Right lobe of liver (tissue), 6 donors: ENCODE measurements at regions of chrX and their contacts with region 1.

Region 1: DNA sequence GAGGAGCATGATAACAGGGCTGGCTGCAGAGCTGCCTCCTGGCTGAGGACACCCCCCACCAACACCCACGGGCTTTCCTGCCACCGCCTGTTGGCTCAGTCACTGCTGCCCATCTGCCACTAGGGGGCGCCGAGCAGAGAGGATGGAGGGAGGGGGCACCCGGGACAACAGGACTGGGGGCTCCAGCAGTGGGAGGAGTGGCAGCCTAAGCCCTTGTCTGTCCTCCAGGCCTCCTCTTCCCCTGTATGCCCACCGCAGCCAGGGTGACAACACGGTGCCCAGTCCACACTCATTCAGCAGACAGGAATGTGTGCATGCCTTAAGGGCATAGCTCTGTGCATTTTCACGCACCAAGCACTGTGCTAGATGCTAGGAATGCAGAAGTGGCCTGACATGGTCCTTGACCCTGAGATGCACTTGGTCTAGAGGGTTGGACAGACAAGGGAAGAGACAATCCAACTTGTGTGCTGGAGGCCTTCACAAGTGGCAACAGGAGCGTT is 149.9 kb downstream of the AMMECR1 start:
- DNase-seq: peak in 1 of 3 donors; percentile 46
- ATAC-seq: peak in 3 of 4 donors; percentile 31 to 40 (median 39)
- H3K4me3 ChIP-seq: no peak overlapping the region
- H3K27ac ChIP-seq: no peak overlapping the region
- H3K4me1 ChIP-seq: no peaks in the 10 kb centered on the region
- H3K27me3 ChIP-seq: no peaks in the 10 kb centered on the region
- CTCF ChIP-seq: peak; percentile 25 to 59 (median 50)
- POLR2A ChIP-seq: no peak

Region 2: GRCh38 chrX:110060846-110061537 is 107.0 kb before region 1 on chrX:
- intact Hi-C with region 1: no loop called
- DNase-seq: no peak
- ATAC-seq: no peak
- H3K4me3 ChIP-seq: no peak overlapping the region
- H3K27ac ChIP-seq: no peak overlapping the region
- H3K4me1 ChIP-seq: no peaks in the 10 kb centered on the region
- H3K27me3 ChIP-seq: no peaks in the 10 kb centered on the region
- CTCF ChIP-seq: no peak
- POLR2A ChIP-seq: no peak

Region 3: DNA sequence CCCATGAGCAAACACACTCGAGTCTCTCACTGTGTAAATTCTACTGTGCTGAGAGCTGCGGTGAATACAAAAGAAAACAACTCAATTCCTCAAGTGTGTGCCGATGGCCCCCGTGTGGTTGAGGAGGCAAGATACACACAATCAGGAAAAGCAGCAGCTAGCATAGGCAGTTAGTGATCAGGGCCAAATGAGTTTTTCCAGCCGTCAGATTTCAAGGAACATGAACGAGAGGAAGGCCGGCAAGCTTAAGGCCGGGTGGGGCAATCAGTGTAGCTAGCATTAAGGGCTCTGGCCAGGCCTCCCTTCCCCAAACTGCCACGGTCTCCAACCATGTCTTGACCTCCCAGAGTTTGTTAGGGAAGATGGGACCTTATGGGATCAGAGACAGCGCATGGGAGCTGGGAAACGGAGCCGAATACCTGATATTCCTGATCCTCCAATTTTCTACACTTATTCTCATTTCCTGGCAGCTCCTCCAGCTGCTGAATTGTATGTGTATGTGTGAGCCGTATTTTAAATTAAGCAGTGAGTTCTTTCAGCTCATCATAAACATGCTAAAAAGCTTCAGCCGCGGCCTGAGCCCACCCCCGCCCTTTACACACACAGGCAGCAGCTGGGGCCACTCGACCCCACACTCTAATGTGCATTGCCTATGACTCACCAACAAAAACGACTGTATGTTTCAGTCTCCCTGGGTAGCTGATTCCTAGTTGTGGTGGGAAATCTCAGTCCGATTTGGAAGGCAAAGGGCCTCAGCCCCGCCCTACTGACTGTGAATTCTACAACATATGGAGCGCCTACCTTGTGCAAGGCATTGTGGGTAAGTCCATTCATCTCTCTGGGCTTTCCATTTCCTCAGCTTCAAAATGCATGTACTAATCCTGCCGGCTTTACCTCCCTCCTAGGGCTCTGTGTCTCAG is 250.6 kb after region 1 on chrX:
- intact Hi-C with region 1: loop called in 1 of 2 experiments (anchors 5 kb)
- DNase-seq: no peak
- ATAC-seq: no peak
- H3K4me3 ChIP-seq: no peak overlapping the region
- H3K27ac ChIP-seq: no peak overlapping the region
- H3K4me1 ChIP-seq: peaks cover 0 to 11% (median 4%) of the 10 kb centered on the region in 4 donors
- H3K27me3 ChIP-seq: peaks cover 0 to 3% of the 10 kb centered on the region in 2 donors
- CTCF ChIP-seq: peak in 3 of 4 donors; percentile 22 to 25 (median 24)
- POLR2A ChIP-seq: no peak

Region 4: DNA sequence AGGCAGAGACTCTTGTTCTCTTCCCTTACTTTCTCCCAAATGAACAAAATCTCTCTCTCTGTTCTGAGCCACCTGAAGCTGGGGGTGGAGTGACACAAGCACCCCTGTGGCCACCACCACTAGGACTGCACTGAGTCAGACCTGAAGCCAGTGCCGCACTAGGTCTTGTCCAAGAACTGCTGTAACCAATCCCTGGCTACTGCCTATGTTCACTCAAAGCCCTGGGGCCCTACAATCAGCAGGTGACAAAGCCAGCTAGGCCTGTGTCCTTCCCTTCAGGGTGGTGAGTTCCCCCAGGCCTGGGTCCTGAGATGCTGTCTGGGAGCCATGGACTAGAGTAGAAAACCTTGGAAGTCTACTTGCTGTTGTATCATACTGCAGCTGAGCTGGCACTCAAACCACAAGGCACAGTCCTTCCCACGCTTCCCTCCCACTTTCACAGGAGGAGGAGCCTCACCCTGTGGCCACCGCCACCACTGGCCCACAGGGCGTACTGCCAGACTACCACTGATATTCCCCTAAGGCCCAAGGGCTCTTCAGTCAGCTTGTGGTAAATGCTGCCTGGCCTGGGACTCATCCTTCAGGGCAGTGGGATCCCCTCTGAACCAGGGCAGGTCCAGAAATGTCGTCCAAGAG is 309.7 kb after region 1 on chrX:
- intact Hi-C with region 1: no loop called
- DNase-seq: no peak
- ATAC-seq: no peak
- H3K4me3 ChIP-seq: no peak overlapping the region
- H3K27ac ChIP-seq: no peak overlapping the region
- H3K4me1 ChIP-seq: no peaks in the 10 kb centered on the region
- H3K27me3 ChIP-seq: peaks cover 0 to 6% of the 10 kb centered on the region in 2 donors
- CTCF ChIP-seq: no peak
- POLR2A ChIP-seq: no peak